Activated CD4-positive, alpha-beta T cell treated with anti-CD3 and anti-CD28 coated beads, Interleukin-2, amount 10 ng/mL, durations not matched to agents 24 days and 14 days (primary cell): ENCODE measurements at regions of chr4 and their contacts with region 1.

Region 1: GRCh38 chr4:121462660-121463261 is 81.9 kb upstream of the QRFPR start:
- DNase-seq: peak; percentile 85
- H3K4me3 Mint-ChIP-seq: no peak overlapping the region
- H3K27ac Mint-ChIP-seq: no peak overlapping the region
- H3K4me1 Mint-ChIP-seq: peaks cover 2% of the 10 kb centered on the region
- H3K27me3 Mint-ChIP-seq: peaks cover 38% of the 10 kb centered on the region

Region 2: GRCh38 chr4:120902925-120903324 is 559.8 kb before region 1 on chr4:
- intact Hi-C with region 1: no loop called
- DNase-seq: no peak
- H3K4me3 Mint-ChIP-seq: no peak overlapping the region
- H3K27ac Mint-ChIP-seq: no peak overlapping the region
- H3K4me1 Mint-ChIP-seq: no peaks in the 10 kb centered on the region
- H3K27me3 Mint-ChIP-seq: peaks cover 14% of the 10 kb centered on the region

Region 3: GRCh38 chr4:121510341-121510874 is 47.6 kb after region 1 on chr4:
- intact Hi-C with region 1: no loop called
- DNase-seq: no peak
- H3K4me3 Mint-ChIP-seq: no peak overlapping the region
- H3K27ac Mint-ChIP-seq: no peak overlapping the region
- H3K4me1 Mint-ChIP-seq: peaks cover 10% of the 10 kb centered on the region
- H3K27me3 Mint-ChIP-seq: peaks cover 10% of the 10 kb centered on the region

Region 4: GRCh38 chr4:121656269-121656641 is 193.5 kb after region 1 on chr4:
- intact Hi-C with region 1: loop called (anchors 5 kb)
- DNase-seq: peak; percentile 63
- H3K4me3 Mint-ChIP-seq: no peak overlapping the region
- H3K27ac Mint-ChIP-seq: no peak overlapping the region
- H3K4me1 Mint-ChIP-seq: no peaks in the 10 kb centered on the region
- H3K27me3 Mint-ChIP-seq: peaks cover 28% of the 10 kb centered on the region